Heart left ventricle (tissue), 16 donors: ENCODE measurements at regions of chr2 and their contacts with region 1.

Region 1: GRCh38 chr2:152298754-152299153 is 36.2 kb upstream of the FMNL2 start:
- DNase-seq: no peak
- ATAC-seq: no peak
- H3K4me3 ChIP-seq: no peak overlapping the region
- H3K27ac ChIP-seq: no peak overlapping the region
- H3K4me1 ChIP-seq: no peaks in the 10 kb centered on the region
- H3K27me3 ChIP-seq: peaks cover 0 to 4% (median 0%) of the 10 kb centered on the region in 9 donors
- CTCF ChIP-seq: no peak
- POLR2A ChIP-seq: no peak

Region 2: GRCh38 chr2:152240559-152241231 is 58.1 kb before region 1 on chr2:
- intact Hi-C with region 1: loop called in 1 of 10 experiments (anchors 10 kb)
- DNase-seq: no peak
- ATAC-seq: peak in 1 of 4 donors; percentile 50
- H3K4me3 ChIP-seq: no peak overlapping the region
- H3K27ac ChIP-seq: no peak overlapping the region
- H3K4me1 ChIP-seq: peaks cover 0 to 6% (median 0%) of the 10 kb centered on the region in 12 donors
- H3K27me3 ChIP-seq: no peaks in the 10 kb centered on the region
- CTCF ChIP-seq: no peak
- POLR2A ChIP-seq: no peak

Region 3: DNA sequence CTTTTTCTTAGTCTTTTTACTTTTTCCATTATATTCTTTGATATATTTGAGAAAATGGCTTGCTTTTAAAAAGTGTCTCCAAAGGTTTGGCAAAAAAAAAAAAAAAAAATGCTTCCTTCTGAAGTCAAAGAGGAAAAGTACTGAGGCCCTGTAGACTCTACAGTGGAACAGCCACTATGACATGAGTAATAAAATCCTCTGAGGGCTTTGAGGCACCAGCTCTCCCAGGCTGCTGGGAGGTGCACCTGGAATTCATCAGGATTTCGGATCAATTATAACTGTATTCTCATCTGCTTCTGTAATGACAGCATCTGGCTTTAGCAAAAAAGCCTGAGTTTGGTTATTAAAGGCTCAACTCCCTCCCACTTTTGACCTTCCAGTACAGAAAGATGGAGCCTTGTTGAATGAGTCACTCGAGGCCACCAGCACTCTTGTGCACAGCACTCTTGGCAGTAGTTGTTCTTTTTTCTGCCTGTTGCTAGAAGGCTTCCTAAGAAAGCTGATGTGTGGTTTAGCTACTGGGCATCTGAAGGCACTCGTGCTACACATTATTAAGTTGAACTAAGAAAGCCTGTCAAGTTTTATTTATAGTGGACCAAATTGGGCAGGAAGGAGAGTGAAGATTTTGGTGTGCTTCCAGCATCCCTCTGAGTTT is 287.2 kb after region 1 on chr2:
- intact Hi-C with region 1: no loop called
- DNase-seq: peak in 1 of 5 donors; percentile 42
- ATAC-seq: peak in 3 of 4 donors; percentile 57 to 94 (median 85)
- H3K4me3 ChIP-seq: no peak overlapping the region
- H3K27ac ChIP-seq: no peak overlapping the region
- H3K4me1 ChIP-seq: peaks cover 0 to 14% (median 6%) of the 10 kb centered on the region in 12 donors
- H3K27me3 ChIP-seq: no peaks in the 10 kb centered on the region
- CTCF ChIP-seq: no peak
- POLR2A ChIP-seq: no peak